Heart left ventricle (tissue), 16 donors: ENCODE measurements at regions of chr2 and their contacts with region 1.

Region 1: GRCh38 chr2:75640621-75641121 is 5.9 kb upstream of the MRPL19 start:
- DNase-seq: peak; percentile 59 to 70 (median 65)
- ATAC-seq: peak; percentile 87 to 99 (median 96)
- H3K4me3 ChIP-seq: no peak overlapping the region
- H3K27ac ChIP-seq: peak overlapping the region in 3 of 12 donors; percentile 1 to 22 (median 15)
- H3K4me1 ChIP-seq: peaks cover 0 to 14% (median 4%) of the 10 kb centered on the region in 12 donors
- H3K27me3 ChIP-seq: no peaks in the 10 kb centered on the region
- CTCF ChIP-seq: peak; percentile 94 to 99 (median 98)
- POLR2A ChIP-seq: no peak

Region 2: GRCh38 chr2:75480971-75481836 is 159.5 kb before region 1 on chr2:
- intact Hi-C with region 1: no loop called
- DNase-seq: no peak
- ATAC-seq: no peak
- H3K4me3 ChIP-seq: no peak overlapping the region
- H3K27ac ChIP-seq: no peak overlapping the region
- H3K4me1 ChIP-seq: peaks cover 0 to 2% (median 0%) of the 10 kb centered on the region in 12 donors
- H3K27me3 ChIP-seq: peaks cover 0 to 5% (median 0%) of the 10 kb centered on the region in 9 donors
- CTCF ChIP-seq: no peak
- POLR2A ChIP-seq: no peak

Region 3: DNA sequence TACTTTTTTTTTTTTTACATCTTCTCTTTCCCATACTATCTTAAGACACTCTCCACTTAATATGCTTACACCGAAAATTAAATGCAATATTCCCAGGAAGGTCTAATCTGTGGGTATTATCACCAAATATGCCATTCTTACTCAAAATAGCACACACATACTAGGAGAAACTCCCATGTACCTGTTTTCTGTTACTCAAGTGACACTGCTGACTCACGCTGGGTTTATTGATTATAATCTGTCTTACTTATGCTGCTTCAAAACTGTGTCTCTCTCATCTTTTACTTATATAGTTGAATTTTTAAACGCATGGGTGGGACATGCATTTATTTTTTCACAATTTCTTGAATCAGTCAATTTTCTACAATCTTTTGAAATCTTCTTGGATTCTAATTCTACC is 35.8 kb after region 1 on chr2:
- intact Hi-C with region 1: loop called in 8 of 10 experiments (anchors 1 to 5 kb)
- DNase-seq: no peak
- ATAC-seq: no peak
- H3K4me3 ChIP-seq: no peak overlapping the region
- H3K27ac ChIP-seq: no peak overlapping the region
- H3K4me1 ChIP-seq: peaks cover 0 to 10% (median 0%) of the 10 kb centered on the region in 12 donors
- H3K27me3 ChIP-seq: no peaks in the 10 kb centered on the region
- CTCF ChIP-seq: no peak
- POLR2A ChIP-seq: no peak

Region 4: GRCh38 chr2:75716406-75716805 is 75.7 kb after region 1 on chr2:
- intact Hi-C with region 1: loop called in 4 of 10 experiments (anchors 5 to 10 kb)
- DNase-seq: no peak
- ATAC-seq: no peak
- H3K4me3 ChIP-seq: no peak overlapping the region
- H3K27ac ChIP-seq: no peak overlapping the region
- H3K4me1 ChIP-seq: peaks cover 0 to 2% (median 0%) of the 10 kb centered on the region in 12 donors
- H3K27me3 ChIP-seq: peaks cover 0 to 7% (median 0%) of the 10 kb centered on the region in 9 donors
- CTCF ChIP-seq: peak in 1 of 12 donors; percentile 7
- POLR2A ChIP-seq: no peak